ENCODE measurements at regions of chr3 and their contacts with region 1.

Region 1: DNA sequence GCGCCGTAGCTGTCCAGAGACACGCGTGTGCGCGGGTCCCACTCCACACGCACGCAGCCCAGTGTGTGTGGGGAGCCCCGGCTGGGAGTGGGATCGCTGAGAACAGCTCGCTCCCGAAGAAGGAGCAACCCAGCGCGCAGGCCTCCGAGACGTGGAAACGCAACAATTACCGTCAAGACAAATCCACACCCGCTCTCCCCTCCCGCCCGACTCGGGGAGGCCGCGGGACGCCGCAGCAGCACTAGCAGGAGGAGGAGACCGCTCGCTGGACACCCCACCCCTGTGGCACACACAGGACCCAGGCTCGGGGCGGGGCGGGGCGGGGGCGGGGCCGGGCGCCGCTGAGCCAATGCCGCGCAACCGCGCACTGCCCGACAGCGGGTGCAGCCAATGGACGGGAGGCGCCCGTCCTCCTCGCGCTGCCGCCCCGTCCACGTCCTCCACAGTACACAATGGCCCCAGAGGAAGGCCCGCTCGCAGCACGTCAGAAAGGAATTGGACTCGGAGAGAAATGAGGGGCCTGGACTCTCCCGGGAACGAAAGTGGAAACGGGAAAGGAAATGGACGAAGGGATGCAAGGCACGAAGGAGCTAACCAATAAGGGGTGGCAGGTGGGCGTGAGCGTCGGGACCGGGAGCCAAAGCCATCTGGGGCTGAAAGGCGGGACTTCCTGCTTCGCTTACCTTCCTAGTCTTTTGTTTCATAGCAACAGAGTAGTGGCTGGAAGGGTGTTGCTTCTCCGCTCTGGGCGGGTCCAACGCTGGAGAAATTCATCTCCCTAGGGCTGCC is at the start of gene CBLB:
- DNase-seq: peak; percentile 77
- ATAC-seq: peak; percentile 92
- H3K4me3 ChIP-seq: peak within 1 kb of the TSS; percentile 98
- H3K27ac ChIP-seq: peak within 1 kb of the TSS; percentile 94
- H3K4me1 ChIP-seq: peaks cover 7% of the 10 kb centered on the region
- H3K27me3 ChIP-seq: no peaks in the 10 kb centered on the region
- CTCF ChIP-seq: no peak
- EP300 ChIP-seq: 0 out of 4 replicates have a peak, but pooled peaks of 1 of the 2 experiments have one; percentile 6
- POLR2A ChIP-seq: peak; percentile 85
- RAD21 ChIP-seq: no peak
- polyA plus RNA-seq, gene CBLB: 17.2 to 17.6 TPM

Region 2: GRCh38 chr3:105686278-105686897 is 182.5 kb before region 1 on chr3:
- CTCF ChIA-PET with region 1: no interaction called
- POLR2A ChIA-PET with region 1: no interaction called
- RAD21 ChIA-PET with region 1: interaction called, 3 read pairs
- SMC1A ChIA-PET with region 1: interaction called, 5 read pairs
- in situ Hi-C with region 1: no loop called
- intact Hi-C with region 1: loop called (anchors 5 kb)
- DNase-seq: no peak
- ATAC-seq: peak; percentile 46
- H3K4me3 ChIP-seq: no peak overlapping the region
- H3K27ac ChIP-seq: no peak overlapping the region
- H3K4me1 ChIP-seq: no peaks in the 10 kb centered on the region
- H3K27me3 ChIP-seq: no peaks in the 10 kb centered on the region
- CTCF ChIP-seq: peak; percentile 57 to 69 (median 65)
- EP300 ChIP-seq: no peak
- POLR2A ChIP-seq: no peak
- RAD21 ChIP-seq: peak; percentile 83

Region 3: DNA sequence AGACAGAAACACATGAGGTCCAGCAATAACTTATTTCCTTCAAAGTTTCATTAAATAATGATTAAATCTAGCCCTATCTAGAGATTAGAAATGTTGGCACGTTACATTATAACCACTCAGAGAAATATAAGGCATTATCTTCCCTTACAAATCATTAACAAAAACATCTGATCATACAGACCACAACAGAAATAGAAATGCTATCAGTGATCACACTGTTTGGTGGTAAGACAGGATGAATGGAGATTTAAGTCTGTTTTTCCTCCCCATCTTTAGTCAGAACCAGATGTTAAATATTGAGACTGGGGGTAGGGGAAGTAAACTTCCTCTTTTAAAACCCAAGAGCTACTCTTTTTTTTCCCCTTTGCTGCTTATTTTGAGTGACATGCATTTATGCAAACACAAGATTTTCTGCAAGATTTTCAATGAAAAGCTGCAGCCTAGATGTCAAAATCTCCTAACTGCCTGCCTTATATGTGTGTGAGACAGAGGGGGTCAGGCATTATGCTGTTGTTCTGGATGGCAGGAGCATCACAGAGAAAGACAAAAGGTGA is 70.5 kb before region 1 on chr3:
- CTCF ChIA-PET with region 1: interaction called, 4 read pairs
- POLR2A ChIA-PET with region 1: interaction called, 9 read pairs
- RAD21 ChIA-PET with region 1: interaction called, 15 read pairs
- SMC1A ChIA-PET with region 1: interaction called, 15 read pairs
- in situ Hi-C with region 1: no loop called
- intact Hi-C with region 1: loop called (anchors 5 kb)
- DNase-seq: peak; percentile 51
- ATAC-seq: peak; percentile 73
- H3K4me3 ChIP-seq: no peak overlapping the region
- H3K27ac ChIP-seq: peak overlapping the region; percentile 61
- H3K4me1 ChIP-seq: peaks cover 37% of the 10 kb centered on the region
- H3K27me3 ChIP-seq: no peaks in the 10 kb centered on the region
- CTCF ChIP-seq: no peak
- EP300 ChIP-seq: peak; percentile 64 to 73; a peak in 3 of 4 replicates
- POLR2A ChIP-seq: no peak
- RAD21 ChIP-seq: peak; percentile 16; the same call in 1 of the 2 replicates

Region 4: GRCh38 chr3:106068795-106069194 is 199.9 kb after region 1 on chr3:
- CTCF ChIA-PET with region 1: no interaction called
- POLR2A ChIA-PET with region 1: no interaction called
- RAD21 ChIA-PET with region 1: interaction called, 5 read pairs
- SMC1A ChIA-PET with region 1: interaction called, 5 read pairs
- in situ Hi-C with region 1: no loop called
- intact Hi-C with region 1: loop called (anchors 5 kb)
- DNase-seq: no peak
- ATAC-seq: peak; percentile 91
- H3K4me3 ChIP-seq: no peak overlapping the region
- H3K27ac ChIP-seq: peak overlapping the region; percentile 20; the same call in 1 of the 2 replicates
- H3K4me1 ChIP-seq: no peaks in the 10 kb centered on the region
- H3K27me3 ChIP-seq: no peaks in the 10 kb centered on the region
- CTCF ChIP-seq: no peak
- EP300 ChIP-seq: no peak; a peak in 1 of 4 replicates
- POLR2A ChIP-seq: no peak
- RAD21 ChIP-seq: no peak

Region 5: GRCh38 chr3:106176734-106177133 is 307.8 kb after region 1 on chr3:
- CTCF ChIA-PET with region 1: no interaction called
- POLR2A ChIA-PET with region 1: no interaction called
- RAD21 ChIA-PET with region 1: interaction called, 39 read pairs
- SMC1A ChIA-PET with region 1: interaction called, 45 read pairs
- in situ Hi-C with region 1: no loop called
- intact Hi-C with region 1: loop called (anchors 1 kb)
- DNase-seq: peak; percentile 88
- ATAC-seq: peak; percentile 91
- H3K4me3 ChIP-seq: 0 out of 2 replicates have a peak overlapping the region, but pooled peaks have one; percentile 11
- H3K27ac ChIP-seq: peak overlapping the region; percentile 75
- H3K4me1 ChIP-seq: peaks cover 39% of the 10 kb centered on the region
- H3K27me3 ChIP-seq: no peaks in the 10 kb centered on the region
- CTCF ChIP-seq: no peak
- EP300 ChIP-seq: peak; percentile 5 to 67; a peak in 1 of 4 replicates
- POLR2A ChIP-seq: no peak
- RAD21 ChIP-seq: peak; percentile 37; the same call in 1 of the 2 replicates

Region 6: GRCh38 chr3:106255870-106256248 is 386.9 kb after region 1 on chr3:
- CTCF ChIA-PET with region 1: no interaction called
- POLR2A ChIA-PET with region 1: interaction called, 3 read pairs
- RAD21 ChIA-PET with region 1: interaction called, 11 read pairs
- SMC1A ChIA-PET with region 1: interaction called, 3 read pairs
- in situ Hi-C with region 1: no loop called
- intact Hi-C with region 1: loop called (anchors 2 kb)
- DNase-seq: peak; percentile 93
- ATAC-seq: peak; percentile 88
- H3K4me3 ChIP-seq: peak overlapping the region; percentile 83
- H3K27ac ChIP-seq: peak overlapping the region; percentile 99
- H3K4me1 ChIP-seq: no peaks in the 10 kb centered on the region
- H3K27me3 ChIP-seq: no peaks in the 10 kb centered on the region
- CTCF ChIP-seq: no peak
- EP300 ChIP-seq: peak in 1 of 2 experiments; percentile 82; a peak in 2 of 4 replicates
- POLR2A ChIP-seq: peak; percentile 71
- RAD21 ChIP-seq: peak; percentile 7; the same call in 1 of the 2 replicates

Region 7: DNA sequence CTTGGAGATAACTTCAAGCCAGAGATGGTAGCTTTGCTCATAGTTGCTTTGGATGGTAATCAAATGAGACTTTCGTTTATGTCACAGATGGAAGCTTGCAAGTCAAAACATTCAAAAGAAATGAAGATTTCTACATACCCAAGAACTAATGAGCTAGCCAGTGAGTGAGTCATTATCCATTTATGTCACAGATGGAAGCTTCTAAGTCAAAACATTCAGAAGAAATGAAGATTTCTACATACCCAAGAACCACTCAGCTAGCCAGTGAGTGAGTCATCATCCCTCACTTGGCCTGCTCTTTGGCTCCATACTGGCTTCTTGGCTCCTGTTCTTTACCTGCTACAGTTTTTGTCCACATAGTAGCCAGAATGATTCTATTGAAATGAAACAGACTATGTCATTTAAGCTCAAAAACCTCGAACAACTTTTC is 559.6 kb after region 1 on chr3:
- CTCF ChIA-PET with region 1: no interaction called
- POLR2A ChIA-PET with region 1: no interaction called
- RAD21 ChIA-PET with region 1: no interaction called
- SMC1A ChIA-PET with region 1: no interaction called
- in situ Hi-C with region 1: no loop called
- intact Hi-C with region 1: loop called (anchors 10 kb)
- DNase-seq: no peak
- ATAC-seq: peak; percentile 44; the same call in 2 of the 3 replicates
- H3K4me3 ChIP-seq: no peak overlapping the region
- H3K27ac ChIP-seq: no peak overlapping the region
- H3K4me1 ChIP-seq: peaks cover 13% of the 10 kb centered on the region
- H3K27me3 ChIP-seq: no peaks in the 10 kb centered on the region
- CTCF ChIP-seq: no peak
- EP300 ChIP-seq: no peak
- POLR2A ChIP-seq: no peak
- RAD21 ChIP-seq: no peak

Measured in GM12878 (cell line).